GM13976 (cell line): ENCODE measurements at regions of chr4 and their contacts with region 1.

Region 1: GRCh38 chr4:140609548-140610425 is 41.0 kb upstream of the UCP1 start:
- DNase-seq: peak; percentile 73
- CTCF ChIP-seq: peak; percentile 12

Region 2: DNA sequence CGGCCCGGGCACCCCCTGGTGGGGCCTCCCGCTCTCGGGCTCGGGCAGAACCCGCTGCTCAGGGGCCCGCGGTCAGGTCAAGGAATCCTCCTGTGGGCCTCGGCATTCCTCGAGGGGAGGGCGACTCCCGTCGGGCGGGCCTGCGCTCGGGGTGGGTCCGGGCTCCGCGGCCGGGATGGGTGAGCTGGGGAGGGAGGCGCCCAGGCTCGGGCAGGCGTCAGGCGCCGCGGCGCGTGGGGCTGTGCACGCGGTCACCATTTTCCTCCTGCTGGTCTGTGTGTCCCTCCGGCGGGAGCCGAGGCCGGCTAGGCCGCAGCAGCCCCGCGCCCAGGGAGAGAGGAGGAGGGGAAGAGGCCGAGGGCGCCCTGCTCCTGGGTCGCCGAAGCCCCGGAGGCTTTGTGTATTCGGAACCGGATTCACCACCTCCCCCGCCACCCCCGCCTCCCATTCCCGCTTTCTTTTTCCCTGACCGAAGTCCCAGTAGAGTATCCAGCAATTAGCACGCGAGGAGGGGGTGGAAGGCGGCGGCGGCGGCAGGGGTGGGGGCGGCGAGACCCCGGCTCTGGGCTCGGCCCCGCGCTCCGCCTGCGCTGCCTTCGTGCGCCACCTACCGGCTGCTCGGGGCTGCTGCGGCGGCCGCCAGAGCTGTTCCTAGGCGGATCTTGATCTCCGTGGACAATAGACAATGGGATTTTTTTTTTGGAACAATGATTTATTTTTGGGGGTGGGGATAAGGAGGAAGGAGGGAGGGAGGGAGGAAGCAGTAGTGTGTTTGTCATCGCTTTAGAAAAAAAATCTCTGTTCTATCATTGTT is 356.8 kb before region 1 on chr4:
- in situ Hi-C with region 1: no loop called
- DNase-seq: peak; percentile 73
- CTCF ChIP-seq: peak; percentile 97

Region 3: GRCh38 chr4:140359562-140360427 is 250.0 kb before region 1 on chr4:
- in situ Hi-C with region 1: loop called (anchors 25 kb)
- DNase-seq: peak; percentile 53
- CTCF ChIP-seq: peak; percentile 65

Region 4: DNA sequence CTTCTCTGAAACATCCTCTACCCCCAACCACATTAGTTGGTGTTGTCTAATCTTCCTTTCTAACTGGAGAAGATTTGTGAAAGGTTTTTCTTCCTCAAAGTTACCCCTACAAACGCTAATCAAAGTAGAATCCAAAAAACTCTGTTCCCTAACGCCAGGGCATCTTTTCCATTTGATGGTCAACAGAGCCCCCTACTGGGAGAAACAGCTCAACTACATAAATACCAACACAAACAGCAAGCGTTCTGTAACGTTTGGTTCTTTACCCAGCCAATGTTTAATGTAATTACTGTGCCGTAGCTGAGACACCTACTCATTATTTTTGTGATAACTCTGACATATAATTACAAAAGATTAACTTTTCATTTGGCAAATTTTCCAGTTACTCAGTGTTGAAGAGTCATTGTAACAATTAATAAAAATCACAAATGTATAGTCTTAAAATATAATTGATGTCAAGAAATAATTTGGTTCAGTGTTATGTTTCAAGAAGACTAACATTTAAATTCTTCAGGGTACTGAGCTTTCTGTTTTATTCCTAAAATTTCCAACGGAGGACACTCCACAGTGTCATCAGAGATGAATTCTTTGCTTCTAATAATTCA is 241.3 kb after region 1 on chr4:
- in situ Hi-C with region 1: loop called (anchors 10 kb)
- DNase-seq: peak; percentile 55
- CTCF ChIP-seq: peak; percentile 65